Caco-2 (cell line): ENCODE measurements at regions of chr20 and their contacts with region 1.

Region 1: GRCh38 chr20:23420943-23421931 is at the start of gene NAPB:
- DNase-seq: peak; percentile 94 to 96
- H3K4me3 ChIP-seq: peak within 1 kb of the TSS; percentile 96
- H3K4me3 Mint-ChIP-seq: peak within 1 kb of the TSS; percentile 94
- H3K27ac Mint-ChIP-seq: peak within 1 kb of the TSS; percentile 67
- H3K4me1 ChIP-seq: peaks cover 12% of the 10 kb centered on the region
- H3K4me1 Mint-ChIP-seq: peaks cover 5% of the 10 kb centered on the region
- H3K27me3 ChIP-seq: no peaks in the 10 kb centered on the region
- H3K27me3 Mint-ChIP-seq: no peaks in the 10 kb centered on the region
- CTCF ChIP-seq: peak; percentile 39 to 56
- total RNA-seq, gene NAPB: 9.4 and 10.1 TPM in 2 replicates

Region 2: GRCh38 chr20:23034721-23035671 is 386.2 kb before region 1 on chr20 and contains the start of gene SSTR4:
- CTCF ChIA-PET with region 1: no interaction called
- POLR2A ChIA-PET with region 1: no interaction called
- intact Hi-C with region 1: no loop called
- DNase-seq: no peak
- H3K4me3 ChIP-seq: no peak within 1 kb of the TSS
- H3K4me3 Mint-ChIP-seq: no peak within 1 kb of the TSS
- H3K27ac Mint-ChIP-seq: no peak within 1 kb of the TSS
- H3K4me1 ChIP-seq: peaks cover 12% of the 10 kb centered on the region
- H3K4me1 Mint-ChIP-seq: peaks cover 5% of the 10 kb centered on the region
- H3K27me3 ChIP-seq: no peaks in the 10 kb centered on the region; the same call in 1 of the 2 replicates
- H3K27me3 Mint-ChIP-seq: no peaks in the 10 kb centered on the region
- CTCF ChIP-seq: no peak
- total RNA-seq, gene SSTR4: not detected in 2 replicates

Region 3: GRCh38 chr20:23257848-23258746 is 163.1 kb before region 1 on chr20:
- CTCF ChIA-PET with region 1: no interaction called
- POLR2A ChIA-PET with region 1: no interaction called
- intact Hi-C with region 1: no loop called
- DNase-seq: no peak
- H3K4me3 ChIP-seq: no peak overlapping the region
- H3K4me3 Mint-ChIP-seq: no peak overlapping the region
- H3K27ac Mint-ChIP-seq: no peak overlapping the region
- H3K4me1 ChIP-seq: no peaks in the 10 kb centered on the region
- H3K4me1 Mint-ChIP-seq: no peaks in the 10 kb centered on the region
- H3K27me3 ChIP-seq: no peaks in the 10 kb centered on the region
- H3K27me3 Mint-ChIP-seq: no peaks in the 10 kb centered on the region
- CTCF ChIP-seq: no peak

Region 4: DNA sequence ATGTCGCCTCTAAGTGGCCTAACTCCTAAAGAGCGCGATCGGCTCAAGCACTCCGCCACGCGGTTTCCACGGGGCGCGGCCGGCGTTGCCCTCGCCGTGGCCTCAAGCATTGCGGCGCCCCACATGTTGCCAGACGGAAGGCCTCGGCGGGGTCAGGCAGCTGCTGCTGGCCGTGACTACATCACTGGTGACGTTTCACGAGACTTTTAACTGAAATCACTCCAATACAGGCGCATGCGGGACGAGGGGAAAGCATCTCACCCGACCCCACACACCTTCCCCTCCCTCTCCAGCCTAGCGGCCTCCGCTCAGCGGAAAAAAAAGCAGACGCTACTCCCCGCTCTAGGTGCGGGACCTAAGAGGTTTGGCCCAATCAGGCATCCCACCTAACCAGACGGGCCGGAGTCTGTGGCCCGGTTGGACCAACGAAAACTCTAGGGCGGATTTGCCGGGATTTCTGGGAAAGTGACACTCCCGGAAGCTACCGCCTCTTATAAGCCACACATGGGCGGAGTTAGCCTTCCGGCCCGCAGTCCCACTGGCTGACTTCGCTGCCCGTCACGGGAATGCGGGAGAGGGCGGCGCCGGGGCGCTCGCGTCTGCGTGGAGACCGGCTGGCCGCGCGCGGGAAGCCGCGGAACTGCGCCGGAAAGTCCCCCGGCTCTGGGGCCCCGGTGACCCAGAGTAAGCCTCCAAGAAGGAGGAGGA is 70.9 kb before region 1 on chr20 and contains the start of gene NXT1:
- CTCF ChIA-PET with region 1: interaction called, 15 read pairs
- POLR2A ChIA-PET with region 1: interaction called, 6 read pairs
- intact Hi-C with region 1: no loop called
- DNase-seq: peak; percentile 98 to 99
- H3K4me3 ChIP-seq: peak within 1 kb of the TSS; percentile 98
- H3K4me3 Mint-ChIP-seq: peak within 1 kb of the TSS; percentile 89
- H3K27ac Mint-ChIP-seq: peak within 1 kb of the TSS; percentile 100
- H3K4me1 ChIP-seq: peaks cover 17% of the 10 kb centered on the region
- H3K4me1 Mint-ChIP-seq: peaks cover 16% of the 10 kb centered on the region
- H3K27me3 ChIP-seq: no peaks in the 10 kb centered on the region
- H3K27me3 Mint-ChIP-seq: no peaks in the 10 kb centered on the region
- CTCF ChIP-seq: no peak
- total RNA-seq, gene NXT1: 33.6 and 34.1 TPM in 2 replicates

Region 5: DNA sequence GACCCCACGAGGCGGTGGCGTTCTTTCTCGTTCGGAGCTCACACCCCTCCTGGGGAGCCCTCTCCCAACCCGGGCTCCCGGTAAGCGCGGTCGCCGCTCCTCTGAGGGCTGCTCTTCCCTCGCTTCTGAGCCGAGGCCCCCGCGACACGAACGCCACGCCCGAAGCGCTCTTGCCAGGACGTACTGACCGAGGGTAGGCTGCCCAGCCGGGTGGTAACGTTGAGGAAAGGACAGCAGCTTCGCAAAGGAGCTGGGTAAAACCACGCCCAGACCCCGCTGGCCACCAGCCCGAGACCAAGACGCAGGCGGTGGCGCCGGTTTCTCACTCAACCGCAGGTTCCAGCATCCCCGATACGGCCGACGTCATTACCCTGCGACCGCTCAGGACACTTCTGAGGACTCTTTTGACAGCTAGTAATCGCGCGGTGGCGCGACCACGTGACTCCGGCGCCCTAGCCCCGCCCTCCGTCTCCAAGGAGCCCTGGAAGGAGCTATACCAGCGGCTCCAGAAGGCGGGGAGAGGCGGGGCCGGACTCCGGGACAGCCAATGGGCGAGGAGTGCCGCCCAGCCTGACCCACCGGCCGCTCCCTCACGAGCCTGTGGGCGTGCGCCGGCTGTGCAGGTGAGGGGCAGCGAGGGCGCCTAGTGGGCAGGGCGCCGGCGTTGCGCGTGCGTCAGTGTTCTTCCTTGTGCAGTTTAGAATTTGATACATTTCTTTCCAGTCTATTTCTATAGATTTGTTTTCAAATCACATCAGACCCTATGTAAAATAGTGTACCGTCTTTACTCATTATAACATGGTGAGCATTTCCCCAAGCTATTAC is 63.3 kb before region 1 on chr20:
- CTCF ChIA-PET with region 1: interaction called, 4 read pairs
- POLR2A ChIA-PET with region 1: interaction called, 6 read pairs
- intact Hi-C with region 1: loop called (anchors 5 kb)
- DNase-seq: peak; percentile 100
- H3K4me3 ChIP-seq: peak overlapping the region; percentile 75
- H3K4me3 Mint-ChIP-seq: peak overlapping the region; percentile 91
- H3K27ac Mint-ChIP-seq: peak overlapping the region; percentile 98
- H3K4me1 ChIP-seq: peaks cover 18% of the 10 kb centered on the region; the same call in 1 of the 2 replicates
- H3K4me1 Mint-ChIP-seq: peaks cover 9% of the 10 kb centered on the region
- H3K27me3 ChIP-seq: no peaks in the 10 kb centered on the region
- H3K27me3 Mint-ChIP-seq: no peaks in the 10 kb centered on the region
- CTCF ChIP-seq: no peak

Region 6: DNA sequence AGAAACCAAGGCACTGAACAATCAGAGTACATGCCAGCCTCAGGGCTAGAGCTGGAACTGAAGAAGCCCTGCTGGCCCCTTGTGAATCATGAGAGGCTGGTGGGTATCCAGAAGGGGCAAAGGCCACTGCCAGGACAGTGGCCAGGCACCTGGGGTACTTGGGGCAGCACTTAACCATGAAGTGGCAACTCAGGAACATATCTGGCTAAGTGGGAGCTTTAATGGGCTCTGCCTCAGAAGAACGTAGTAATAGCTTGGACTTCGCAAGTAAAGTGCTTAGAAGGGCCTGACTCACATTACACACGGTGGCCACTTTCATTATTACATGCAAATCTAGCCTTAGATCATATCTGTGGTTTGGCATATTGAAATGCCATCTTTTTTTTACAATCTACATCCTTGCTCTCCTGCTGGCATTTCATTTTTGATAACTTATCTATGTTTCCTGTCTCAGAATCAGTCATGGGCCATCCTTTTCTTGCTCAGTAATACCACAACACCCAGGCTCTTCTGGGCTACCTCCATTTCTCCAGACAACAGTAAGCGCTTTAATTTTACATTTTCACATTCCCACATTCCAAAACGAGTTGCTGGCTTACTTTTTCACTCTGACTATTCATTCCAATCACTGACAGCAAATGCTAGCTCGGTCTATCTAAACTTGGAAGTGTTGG is 21.5 kb before region 1 on chr20:
- CTCF ChIA-PET with region 1: no interaction called
- POLR2A ChIA-PET with region 1: no interaction called
- intact Hi-C with region 1: no loop called
- DNase-seq: no peak
- H3K4me3 ChIP-seq: no peak overlapping the region
- H3K4me3 Mint-ChIP-seq: no peak overlapping the region
- H3K27ac Mint-ChIP-seq: no peak overlapping the region
- H3K4me1 ChIP-seq: no peaks in the 10 kb centered on the region
- H3K4me1 Mint-ChIP-seq: no peaks in the 10 kb centered on the region
- H3K27me3 ChIP-seq: no peaks in the 10 kb centered on the region
- H3K27me3 Mint-ChIP-seq: no peaks in the 10 kb centered on the region
- CTCF ChIP-seq: peak in 1 of 2 experiments; percentile 21

Region 7: GRCh38 chr20:23534801-23535593 is 113.8 kb after region 1 on chr20:
- CTCF ChIA-PET with region 1: no interaction called
- POLR2A ChIA-PET with region 1: no interaction called
- intact Hi-C with region 1: no loop called
- DNase-seq: no peak
- H3K4me3 ChIP-seq: no peak overlapping the region
- H3K4me3 Mint-ChIP-seq: no peak overlapping the region
- H3K27ac Mint-ChIP-seq: no peak overlapping the region
- H3K4me1 ChIP-seq: no peaks in the 10 kb centered on the region
- H3K4me1 Mint-ChIP-seq: no peaks in the 10 kb centered on the region
- H3K27me3 ChIP-seq: no peaks in the 10 kb centered on the region
- H3K27me3 Mint-ChIP-seq: no peaks in the 10 kb centered on the region
- CTCF ChIP-seq: no peak